Prostate gland (tissue), 2 donors: ENCODE measurements at regions of chr2 and their contacts with region 1.

Region 1: DNA sequence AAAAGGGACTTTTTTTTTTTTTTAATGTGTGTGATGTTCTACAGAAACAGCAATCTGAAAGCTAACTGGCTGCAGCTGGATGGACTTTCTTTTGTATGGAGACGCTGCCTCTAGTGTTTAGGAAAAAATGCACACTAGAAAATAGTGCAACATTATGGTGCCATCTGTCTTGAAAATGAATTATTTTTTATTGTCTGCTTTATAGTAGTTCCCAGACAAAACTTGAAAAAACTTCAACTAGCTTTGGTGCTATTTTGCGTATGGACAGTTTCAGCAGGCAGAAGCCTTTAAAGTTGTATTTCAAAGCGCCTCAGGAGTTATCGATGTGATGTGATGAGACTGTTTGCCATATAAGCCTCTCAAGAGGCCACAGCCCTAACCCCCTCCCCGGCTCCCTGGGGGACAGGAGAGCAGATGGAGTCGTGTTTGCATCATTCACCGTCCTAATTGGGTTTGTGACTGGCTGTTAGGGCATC is 86.9 kb downstream of the LTBP1 start:
- DNase-seq: no peak
- H3K4me3 ChIP-seq: no peak overlapping the region
- H3K27ac ChIP-seq: no peak overlapping the region
- H3K4me1 ChIP-seq: no peaks in the 10 kb centered on the region
- H3K27me3 ChIP-seq: no peaks in the 10 kb centered on the region
- CTCF ChIP-seq: peak; percentile 21 to 73 (median 50)
- POLR2A ChIP-seq: no peak

Region 2: DNA sequence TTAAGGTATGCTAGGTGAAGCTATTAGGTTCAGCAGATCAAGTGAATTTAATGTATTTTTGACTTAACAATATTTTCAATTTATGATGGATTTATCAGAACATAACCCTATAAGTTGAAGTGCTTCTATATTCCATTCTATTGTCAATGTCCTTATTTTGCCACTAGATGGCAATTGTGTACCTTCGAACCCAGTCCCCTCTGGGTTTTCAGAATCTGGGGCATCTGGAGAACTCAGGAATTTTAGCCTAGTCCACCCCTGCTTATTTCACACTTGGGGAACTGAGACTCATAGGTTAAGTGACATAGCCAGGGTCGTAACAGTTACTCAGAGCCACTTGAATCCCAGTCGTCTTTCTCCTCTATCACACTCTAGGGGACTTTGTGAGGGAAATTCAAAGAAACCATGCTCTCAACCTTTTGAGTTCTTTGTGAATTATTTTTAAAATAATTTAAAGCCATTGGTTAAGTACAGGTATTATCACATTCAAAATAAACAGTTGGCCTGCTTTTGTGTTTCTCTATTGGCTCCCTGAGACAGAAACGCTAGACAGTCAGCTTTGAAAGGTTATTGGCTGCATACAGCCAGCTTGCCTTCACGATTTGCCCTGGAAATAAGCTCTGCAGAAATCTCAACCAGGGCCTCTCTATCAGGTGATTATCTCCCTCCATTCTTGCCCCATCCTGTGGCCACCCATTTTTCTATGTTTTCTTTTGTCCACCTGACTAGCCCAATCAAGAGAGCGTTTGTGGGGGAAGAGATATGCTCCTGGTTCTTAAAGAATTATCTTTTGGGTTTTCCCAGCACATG is 260.8 kb before region 1 on chr2:
- intact Hi-C with region 1: loop called (anchors 2 kb)
- DNase-seq: no peak
- H3K4me3 ChIP-seq: no peak overlapping the region
- H3K27ac ChIP-seq: no peak overlapping the region
- H3K4me1 ChIP-seq: no peaks in the 10 kb centered on the region
- H3K27me3 ChIP-seq: no peaks in the 10 kb centered on the region
- CTCF ChIP-seq: peak in 3 of 4 experiments; percentile 46 to 71 (median 68)
- POLR2A ChIP-seq: no peak

Region 3: GRCh38 chr2:32874931-32875330 is 158.7 kb before region 1 on chr2:
- intact Hi-C with region 1: no loop called
- DNase-seq: no peak
- H3K4me3 ChIP-seq: no peak overlapping the region
- H3K27ac ChIP-seq: no peak overlapping the region
- H3K4me1 ChIP-seq: no peaks in the 10 kb centered on the region
- H3K27me3 ChIP-seq: no peaks in the 10 kb centered on the region
- CTCF ChIP-seq: no peak
- POLR2A ChIP-seq: no peak

Region 4: DNA sequence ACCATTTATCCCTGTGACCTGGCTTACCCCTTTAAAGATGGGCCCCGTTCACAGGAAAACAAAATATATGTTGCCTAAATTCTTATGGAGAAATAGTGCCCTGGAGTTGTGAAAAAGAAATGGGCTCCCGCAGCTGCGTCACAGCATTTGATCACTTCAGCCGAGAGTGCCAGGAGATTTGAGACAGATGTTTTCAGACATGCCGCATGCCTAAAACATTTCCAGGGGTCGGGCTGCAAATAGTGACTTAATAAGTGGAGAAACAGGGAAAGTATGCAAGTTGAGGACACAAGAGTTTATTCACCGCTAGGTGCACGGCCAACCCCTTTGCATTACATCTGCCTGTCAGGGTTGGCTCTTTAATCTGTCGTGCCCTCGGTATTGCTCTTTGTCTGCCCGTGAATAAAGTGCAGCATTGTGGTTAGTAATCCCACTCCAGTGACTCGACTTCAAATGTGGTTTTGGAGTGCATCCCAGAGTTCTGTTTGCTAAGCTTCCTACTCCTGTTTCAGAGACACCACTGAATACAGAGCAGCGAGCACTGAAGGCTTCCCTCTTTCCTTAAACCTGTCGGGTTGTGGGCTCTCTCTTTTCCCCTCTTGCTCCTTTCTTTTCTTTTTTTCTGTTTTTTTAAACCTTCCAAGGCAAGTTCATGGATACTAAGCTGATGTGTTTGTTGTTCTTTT is 100.6 kb after region 1 on chr2:
- intact Hi-C with region 1: loop called (anchors 10 kb)
- DNase-seq: peak; percentile 72
- H3K4me3 ChIP-seq: peak overlapping the region in 1 of 2 donors; percentile 20
- H3K27ac ChIP-seq: peak overlapping the region; percentile 26 to 49
- H3K4me1 ChIP-seq: no peaks in the 10 kb centered on the region
- H3K27me3 ChIP-seq: no peaks in the 10 kb centered on the region
- CTCF ChIP-seq: no peak
- POLR2A ChIP-seq: no peak

Region 5: DNA sequence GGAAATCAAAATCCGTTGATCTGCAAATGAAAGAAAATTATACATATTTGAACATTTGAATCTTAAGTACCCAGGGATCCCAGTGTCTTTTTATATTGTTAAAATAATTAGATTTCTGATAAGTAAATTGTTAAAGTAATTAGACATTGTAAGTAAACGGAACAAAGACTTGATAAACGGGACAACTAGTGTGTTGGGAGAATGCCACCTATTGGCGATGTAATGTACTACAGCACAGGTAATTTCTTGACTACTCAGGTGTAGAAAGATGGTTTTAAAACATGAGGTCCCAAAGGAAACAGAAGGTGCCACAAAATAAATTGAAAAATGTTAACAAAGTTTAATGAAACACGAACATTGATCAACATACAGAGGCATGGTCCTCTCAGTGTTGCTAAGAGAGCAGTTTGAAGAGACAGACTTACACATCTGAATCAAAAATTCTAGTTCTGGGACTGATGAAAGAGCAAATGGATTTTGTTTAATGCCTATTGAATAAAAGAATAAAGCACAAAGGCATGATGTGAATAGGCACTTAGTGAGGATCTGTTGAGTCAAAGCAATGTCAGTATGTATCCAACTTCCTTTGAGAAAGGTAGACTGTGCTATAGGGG is 339.4 kb after region 1 on chr2:
- intact Hi-C with region 1: loop called (anchors 5 kb)
- DNase-seq: peak; percentile 39
- H3K4me3 ChIP-seq: no peak overlapping the region
- H3K27ac ChIP-seq: no peak overlapping the region
- H3K4me1 ChIP-seq: no peaks in the 10 kb centered on the region
- H3K27me3 ChIP-seq: no peaks in the 10 kb centered on the region
- CTCF ChIP-seq: peak; percentile 44 to 77 (median 68)
- POLR2A ChIP-seq: no peak

Region 6: DNA sequence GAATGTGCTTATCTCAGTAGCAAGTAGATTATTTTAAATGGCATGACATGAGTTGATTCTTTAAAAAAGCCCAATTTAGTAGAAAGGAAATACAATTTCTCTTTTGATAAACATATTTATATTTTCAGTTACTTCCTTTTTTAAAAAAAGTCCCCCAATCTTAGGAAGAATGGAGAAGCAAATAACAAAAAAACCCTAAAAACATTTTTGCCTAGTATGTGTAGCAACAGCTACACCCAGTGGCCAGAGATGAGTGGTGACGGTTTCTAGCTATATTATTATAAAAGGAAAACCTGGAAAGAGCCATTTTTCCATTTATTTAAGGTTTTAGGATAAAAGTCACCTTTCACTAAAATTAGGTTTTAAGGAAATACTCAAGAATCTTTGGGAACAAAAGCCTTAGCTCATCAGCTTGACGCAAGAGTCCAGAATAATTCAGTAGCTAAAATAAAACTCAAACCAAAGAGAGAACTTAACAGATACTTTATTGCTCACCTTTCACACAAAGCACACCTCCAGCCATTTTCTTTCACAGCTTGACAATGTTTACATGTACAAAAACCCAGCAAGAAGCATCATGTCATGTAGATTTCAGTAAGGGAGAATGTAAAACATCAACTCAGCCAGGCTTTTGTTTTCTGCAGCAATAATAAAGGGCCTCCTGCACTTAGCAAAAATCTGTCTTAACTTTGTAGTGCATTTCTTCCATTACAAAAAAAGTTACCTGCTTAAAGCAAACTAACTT is 549.7 kb after region 1 on chr2:
- intact Hi-C with region 1: loop called (anchors 5 kb)
- DNase-seq: no peak
- H3K4me3 ChIP-seq: no peak overlapping the region
- H3K27ac ChIP-seq: no peak overlapping the region
- H3K4me1 ChIP-seq: no peaks in the 10 kb centered on the region
- H3K27me3 ChIP-seq: no peaks in the 10 kb centered on the region
- CTCF ChIP-seq: peak; percentile 51 to 83 (median 67)
- POLR2A ChIP-seq: no peak